ENCODE measurements at regions of chr10 and their contacts with region 1.

Region 1: DNA sequence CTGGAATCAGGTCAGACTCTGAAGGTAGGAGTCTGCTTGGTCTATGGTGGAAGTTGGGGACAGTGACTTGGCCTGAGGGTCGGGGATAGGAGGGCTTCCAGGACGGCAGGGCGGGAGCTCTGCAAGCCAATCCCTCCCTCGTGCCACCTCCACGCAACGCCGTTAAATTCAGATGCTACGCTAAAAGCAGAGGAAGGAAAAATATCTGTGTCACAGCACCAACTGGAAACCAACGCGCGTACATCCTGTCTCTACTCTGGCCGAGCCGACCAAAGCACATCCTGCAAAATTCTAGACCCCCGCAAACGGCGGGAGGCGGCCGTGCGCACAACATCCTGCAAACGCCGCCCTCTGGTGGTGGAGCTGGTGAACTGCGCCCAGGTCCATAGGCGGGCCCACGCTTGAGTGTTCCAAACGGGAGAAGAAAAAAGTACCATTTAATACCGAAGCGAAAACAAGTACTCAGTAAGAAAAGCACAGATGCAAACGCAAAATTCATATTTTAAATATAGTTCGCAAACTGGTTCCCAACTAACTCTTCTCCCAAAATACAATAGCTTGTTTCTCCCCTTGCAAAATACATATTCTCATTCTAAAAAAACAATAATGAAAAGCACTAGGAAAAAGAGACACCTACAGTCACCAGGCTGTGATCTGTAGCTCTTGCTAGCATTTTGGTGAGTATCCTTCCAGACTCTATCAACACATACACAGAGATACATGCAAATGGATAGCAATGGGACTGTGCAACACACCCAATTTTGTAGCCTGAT is 45.7 kb upstream of the HSPA12A start:
- DNase-seq: peak; percentile 93
- H3K4me3 Mint-ChIP-seq: peak overlapping the region; percentile 59
- H3K27ac Mint-ChIP-seq: peak overlapping the region; percentile 48
- H3K4me1 Mint-ChIP-seq: peaks cover 12% of the 10 kb centered on the region
- H3K27me3 Mint-ChIP-seq: peaks cover 5% of the 10 kb centered on the region

Region 2: GRCh38 chr10:115947104-115947503 is 841.0 kb before region 1 on chr10:
- intact Hi-C with region 1: no loop called
- DNase-seq: no peak
- H3K4me3 Mint-ChIP-seq: no peak overlapping the region
- H3K27ac Mint-ChIP-seq: no peak overlapping the region
- H3K4me1 Mint-ChIP-seq: no peaks in the 10 kb centered on the region
- H3K27me3 Mint-ChIP-seq: no peaks in the 10 kb centered on the region

Region 3: GRCh38 chr10:116687633-116688032 is 100.4 kb before region 1 on chr10:
- intact Hi-C with region 1: loop called (anchors 1 kb)
- DNase-seq: no peak
- H3K4me3 Mint-ChIP-seq: no peak overlapping the region
- H3K27ac Mint-ChIP-seq: no peak overlapping the region
- H3K4me1 Mint-ChIP-seq: no peaks in the 10 kb centered on the region
- H3K27me3 Mint-ChIP-seq: peaks cover 6% of the 10 kb centered on the region

Region 4: GRCh38 chr10:116742367-116743265 is 45.5 kb before region 1 on chr10 and contains the start of gene HSPA12A:
- intact Hi-C with region 1: loop called (anchors 2 kb)
- DNase-seq: peak; percentile 87
- H3K4me3 Mint-ChIP-seq: peak within 1 kb of the TSS; percentile 53
- H3K27ac Mint-ChIP-seq: no peak within 1 kb of the TSS
- H3K4me1 Mint-ChIP-seq: no peaks in the 10 kb centered on the region
- H3K27me3 Mint-ChIP-seq: peaks cover 62% of the 10 kb centered on the region
- total RNA-seq, gene HSPA12A: 0.05 TPM in 1 of 2 replicates, not detected in the other

Measured in activated CD4-positive, alpha-beta T cell treated with anti-CD3 and anti-CD28 coated beads, Interleukin-2, amount 10 ng/mL, durations not matched to agents 24 days and 14 days (primary cell).